ENCODE measurements at regions of chr20 and their contacts with region 1.

Region 1: DNA sequence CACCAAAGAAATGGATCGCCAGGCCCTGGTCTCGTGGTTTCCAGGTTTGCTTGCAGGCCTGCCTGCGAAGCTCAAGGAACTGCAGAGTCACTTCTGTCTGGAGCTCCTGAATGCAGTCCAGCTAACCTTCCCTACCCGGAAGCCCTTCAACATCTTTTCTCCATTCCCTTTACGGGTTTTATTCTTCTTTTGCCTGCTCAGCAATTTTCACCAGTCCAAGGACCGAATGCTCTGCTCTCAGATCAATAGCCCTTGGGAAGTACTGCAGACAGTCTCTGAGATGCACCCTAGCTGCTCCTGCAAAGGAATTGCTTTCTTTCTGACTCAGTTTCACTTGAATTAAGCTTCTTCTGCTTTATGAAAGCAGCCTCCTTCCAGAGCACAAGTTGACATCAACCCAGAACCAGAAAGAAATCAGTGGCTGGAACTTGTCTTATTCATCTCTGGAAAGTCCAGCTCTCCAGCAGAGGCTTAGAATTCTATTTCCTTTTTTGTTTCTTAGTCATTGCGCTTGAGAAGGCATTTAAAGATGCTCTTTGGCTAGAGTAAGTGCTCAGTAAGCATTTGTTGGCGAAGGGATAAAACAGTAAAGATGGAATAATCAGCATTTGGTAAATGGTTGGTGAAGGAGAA is 18.7 kb upstream of the YWHAB start:
- DNase-seq: no peak
- H3K4me3 ChIP-seq: peak overlapping the region in 2 of 4 donors; percentile 21 to 32
- H3K27ac ChIP-seq: no peak overlapping the region
- H3K4me1 ChIP-seq: peaks cover 0 to 24% (median 16%) of the 10 kb centered on the region in 4 donors
- H3K27me3 ChIP-seq: no peaks in the 10 kb centered on the region
- CTCF ChIP-seq: no peak
- EP300 ChIP-seq: no peak
- POLR2A ChIP-seq: no peak

Region 2: DNA sequence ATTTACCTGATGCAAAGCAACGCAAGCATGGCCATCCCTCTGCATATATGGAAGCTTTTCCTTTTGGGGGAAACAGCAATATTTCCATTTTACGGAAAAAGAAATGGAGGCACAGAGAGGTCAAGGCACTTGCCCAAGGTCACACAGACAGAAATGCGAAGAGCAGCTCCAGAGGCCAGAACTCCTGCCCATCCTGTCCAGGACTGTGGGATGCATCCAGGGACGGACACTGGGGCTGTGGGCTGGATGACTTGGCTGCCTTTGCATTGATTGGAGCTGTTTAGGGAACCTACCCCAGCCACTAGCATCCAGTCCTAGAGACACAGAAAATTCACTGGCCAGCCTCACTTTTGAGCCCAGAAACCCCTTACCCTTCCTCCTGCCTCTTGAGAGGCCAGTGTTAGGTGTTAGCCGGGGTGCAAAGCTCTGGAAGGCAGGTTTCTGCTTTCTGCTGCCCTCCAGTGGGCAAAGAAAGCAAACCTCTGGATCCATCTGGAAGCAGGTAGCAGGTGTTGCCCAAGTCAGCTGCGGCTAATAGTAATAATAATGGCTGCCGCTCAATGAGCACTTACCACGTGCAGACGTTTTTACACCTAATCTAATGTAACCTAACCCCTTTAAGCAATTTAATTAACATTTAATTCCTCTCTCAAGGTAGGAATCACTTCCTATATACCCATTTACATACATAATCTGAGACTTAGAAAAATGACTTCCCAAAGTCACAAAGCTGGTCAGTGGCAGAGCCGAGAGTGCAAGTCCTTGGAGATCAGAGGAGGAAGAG is 183.4 kb before region 1 on chr20:
- intact Hi-C with region 1: loop called (anchors 1 kb)
- DNase-seq: no peak
- H3K4me3 ChIP-seq: no peak overlapping the region
- H3K27ac ChIP-seq: no peak overlapping the region
- H3K4me1 ChIP-seq: peaks cover 0 to 9% (median 0%) of the 10 kb centered on the region in 4 donors
- H3K27me3 ChIP-seq: no peaks in the 10 kb centered on the region
- CTCF ChIP-seq: peak in 2 of 4 experiments; percentile 42 to 57
- EP300 ChIP-seq: no peak
- POLR2A ChIP-seq: no peak

Region 3: DNA sequence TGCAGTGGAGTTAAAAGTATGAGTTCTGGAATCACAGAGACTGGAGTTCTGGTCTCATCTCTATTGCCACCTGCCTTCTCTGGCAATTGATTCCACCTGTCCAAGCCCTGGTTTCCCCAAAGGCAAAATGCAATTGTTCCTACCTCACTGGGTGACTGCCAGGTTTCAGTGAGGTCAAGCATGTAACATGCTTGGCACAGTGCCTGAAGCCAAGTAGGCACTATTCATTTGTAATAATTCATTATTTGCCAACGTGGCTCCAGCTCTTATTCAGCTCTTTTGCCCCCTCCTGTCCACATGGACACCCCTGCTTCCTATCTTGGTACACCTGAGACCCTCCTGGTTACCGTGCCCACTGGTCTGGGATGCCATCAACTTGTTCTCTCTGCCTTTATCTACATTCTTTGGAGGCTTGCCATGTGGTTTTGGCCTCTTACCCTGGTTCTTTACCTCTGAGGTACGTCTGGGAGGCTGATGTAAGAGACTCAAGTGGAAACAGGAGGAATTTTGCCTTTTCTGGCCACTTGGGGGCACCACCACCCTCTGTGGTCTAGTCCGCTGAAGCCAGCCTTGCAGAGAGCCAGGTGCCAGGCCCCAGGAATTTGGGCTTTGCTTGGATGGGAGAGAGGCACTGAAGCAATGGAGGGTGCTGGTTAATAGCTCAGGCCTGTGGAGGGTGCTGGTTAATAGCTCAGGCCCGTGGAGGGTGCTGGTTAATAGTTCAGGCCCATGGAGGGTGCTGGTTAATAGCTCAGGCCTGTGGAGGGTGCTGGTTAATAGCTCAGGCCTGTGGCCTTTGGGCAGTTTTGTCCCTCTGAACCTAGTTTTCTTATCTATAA is 119.4 kb before region 1 on chr20:
- intact Hi-C with region 1: loop called (anchors 2 kb)
- DNase-seq: peak; percentile 81
- H3K4me3 ChIP-seq: no peak overlapping the region
- H3K27ac ChIP-seq: peak overlapping the region in 1 of 4 donors; percentile 38
- H3K4me1 ChIP-seq: peaks cover 0 to 13% (median 11%) of the 10 kb centered on the region in 4 donors
- H3K27me3 ChIP-seq: peaks cover 16 to 75% (median 41%) of the 10 kb centered on the region in 3 donors
- CTCF ChIP-seq: peak; percentile 18 to 62 (median 38)
- EP300 ChIP-seq: no peak
- POLR2A ChIP-seq: no peak

Region 4: DNA sequence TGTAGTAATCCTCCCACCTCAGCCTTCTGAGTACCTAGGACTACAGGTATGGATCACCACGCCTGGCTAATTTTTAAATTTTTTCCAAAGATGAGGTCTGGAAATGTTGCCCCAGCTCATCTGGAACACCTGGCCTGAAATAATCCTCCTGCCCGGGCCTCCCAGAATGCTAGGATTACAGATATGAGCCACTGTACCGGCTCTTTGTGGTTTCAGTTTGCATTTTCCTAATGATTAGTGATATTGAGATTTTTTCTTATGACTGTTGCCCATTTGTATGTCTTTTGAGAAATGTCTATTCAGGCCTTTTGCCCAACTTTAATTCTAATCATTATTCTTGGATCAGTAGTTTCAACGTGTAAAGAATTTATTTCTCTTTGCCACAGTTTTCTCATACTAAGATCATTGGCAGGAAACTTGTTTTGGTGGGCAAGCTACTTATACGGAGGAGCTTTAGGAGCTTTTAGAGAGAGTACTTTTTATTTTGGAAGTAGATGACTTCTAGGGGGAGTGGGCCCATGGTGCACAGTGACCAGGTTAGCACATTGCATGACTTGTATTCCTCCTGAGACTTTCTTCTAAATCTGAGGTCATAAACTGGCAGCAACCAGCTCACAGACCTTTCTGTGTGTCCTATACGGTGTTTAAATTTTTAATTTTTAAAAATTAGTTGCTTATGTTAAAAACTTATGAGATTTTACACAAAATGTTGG is 161.8 kb after region 1 on chr20:
- intact Hi-C with region 1: no loop called
- DNase-seq: no peak
- H3K4me3 ChIP-seq: no peak overlapping the region
- H3K27ac ChIP-seq: no peak overlapping the region
- H3K4me1 ChIP-seq: no peaks in the 10 kb centered on the region
- H3K27me3 ChIP-seq: no peaks in the 10 kb centered on the region
- CTCF ChIP-seq: no peak
- EP300 ChIP-seq: no peak
- POLR2A ChIP-seq: no peak

Measured in sigmoid colon (tissue), 7 donors.